Endothelial cell of umbilical vein (primary cell): ENCODE measurements at regions of chr9 and their contacts with region 1.

Region 1: DNA sequence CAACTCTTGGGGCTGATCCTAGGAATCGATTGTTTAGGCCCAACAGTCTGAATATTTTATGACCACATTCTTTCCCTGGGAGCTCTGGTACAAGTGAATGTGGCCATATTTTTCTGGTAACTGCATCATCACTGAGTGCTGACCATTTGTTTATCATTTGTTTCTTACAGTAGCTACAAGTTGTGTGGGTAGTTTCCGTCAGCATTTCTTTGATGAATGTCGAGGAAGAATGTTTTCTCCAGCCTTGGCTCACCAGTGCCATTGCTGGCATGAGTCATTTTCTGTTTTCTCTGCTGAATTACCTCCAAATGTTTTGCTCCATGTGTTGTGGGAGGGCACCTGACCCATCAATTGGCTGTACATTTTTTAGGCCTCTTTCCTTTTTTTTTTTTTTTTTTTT is 14.1 kb upstream of the CARD19 start:
- DNase-seq: no peak
- H3K4me3 ChIP-seq: no peak overlapping the region
- H3K27ac ChIP-seq: no peak overlapping the region
- H3K4me1 ChIP-seq: no peaks in the 10 kb centered on the region
- H3K27me3 ChIP-seq: no peaks in the 10 kb centered on the region
- CTCF ChIP-seq: no peak
- POLR2A ChIP-seq: no peak

Region 2: DNA sequence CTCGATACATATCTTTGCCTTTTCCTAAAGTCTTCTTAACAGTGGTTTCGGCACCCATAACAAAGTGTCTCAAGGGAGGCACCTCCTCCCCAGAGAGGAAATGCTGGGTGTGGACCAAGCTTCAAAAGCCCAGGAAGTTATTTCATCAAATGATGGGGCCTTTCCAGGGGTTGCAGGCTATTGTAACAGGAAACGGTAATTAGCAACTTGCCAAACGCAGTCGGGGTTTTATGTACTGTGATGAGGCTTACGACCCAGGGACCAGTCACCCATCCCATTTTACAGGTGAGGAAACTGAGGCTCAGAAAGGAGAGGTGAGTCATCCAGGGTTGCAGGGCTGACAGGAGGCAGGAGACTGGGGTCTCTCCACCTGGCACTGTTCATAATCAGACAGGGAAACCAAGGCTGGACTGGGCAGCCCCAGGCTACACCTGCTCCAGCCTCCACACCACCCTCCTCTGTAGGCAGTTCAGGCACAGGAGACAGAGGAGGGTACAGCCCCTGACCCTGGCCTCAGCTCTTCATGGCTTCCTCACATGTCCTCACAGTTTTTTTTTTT is 53.4 kb before region 1 on chr9:
- CTCF ChIA-PET with region 1: no interaction called
- POLR2A ChIA-PET with region 1: interaction called, 15 read pairs
- dilution Hi-C with region 1: no loop called
- intact Hi-C with region 1: no loop called
- DNase-seq: no peak
- H3K4me3 ChIP-seq: no peak overlapping the region
- H3K27ac ChIP-seq: no peak overlapping the region
- H3K4me1 ChIP-seq: no peaks in the 10 kb centered on the region
- H3K27me3 ChIP-seq: no peaks in the 10 kb centered on the region
- CTCF ChIP-seq: no peak
- POLR2A ChIP-seq: no peak

Region 3: GRCh38 chr9:93095205-93096130 is 13.5 kb after region 1 on chr9:
- CTCF ChIA-PET with region 1: no interaction called
- POLR2A ChIA-PET with region 1: no interaction called
- dilution Hi-C with region 1: no loop called
- intact Hi-C with region 1: no loop called
- DNase-seq: peak; percentile 99
- H3K4me3 ChIP-seq: peak overlapping the region in 2 of 3 experiments; percentile 18 to 83
- H3K27ac ChIP-seq: peak overlapping the region; percentile 69
- H3K4me1 ChIP-seq: peaks cover 34% of the 10 kb centered on the region
- H3K27me3 ChIP-seq: no peaks in the 10 kb centered on the region
- CTCF ChIP-seq: no peak
- POLR2A ChIP-seq: peak; percentile 47